ENCODE measurements at regions of chr1 and their contacts with region 1.

Region 1: DNA sequence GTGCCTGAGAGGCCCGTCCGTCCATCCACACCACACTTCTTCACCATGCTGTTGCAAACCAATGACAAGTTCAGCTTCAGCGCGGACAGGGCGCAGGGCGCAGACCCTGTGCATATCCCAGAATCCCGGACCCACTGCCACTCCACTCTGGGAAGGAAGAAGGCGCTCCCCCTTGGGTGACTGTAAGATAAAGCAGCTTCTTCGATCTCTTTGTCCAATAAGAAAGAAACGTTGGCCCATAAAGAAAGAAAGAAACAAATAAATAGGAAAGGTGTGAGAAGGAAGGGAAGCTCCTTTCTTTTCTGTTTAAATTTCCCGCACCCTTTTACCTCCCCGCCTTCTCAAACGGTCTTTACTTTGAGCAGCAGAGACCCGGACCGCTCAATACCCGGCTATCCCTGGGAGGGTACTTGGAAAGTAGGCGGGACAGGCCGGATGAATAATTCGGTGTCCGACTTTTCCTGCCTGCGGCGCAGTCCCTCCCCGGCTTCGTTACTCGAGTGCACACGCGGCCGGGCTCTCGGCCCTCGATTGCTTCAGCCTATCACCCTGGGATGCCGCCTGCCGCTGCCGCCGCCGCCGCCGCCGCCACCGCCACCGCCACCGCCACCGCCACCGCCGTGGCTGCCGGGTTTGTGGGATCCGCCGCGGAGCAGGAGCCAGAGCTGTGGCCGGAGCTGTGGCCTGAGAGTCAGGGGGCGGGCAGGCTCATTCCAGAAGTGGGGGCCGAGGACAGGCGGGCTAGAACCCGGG is 523 bp upstream of the RASAL2 start:
- DNase-seq: peak; percentile 97
- H3K4me3 ChIP-seq: peak overlapping the region; percentile 79 to 92 (median 84)
- H3K27ac ChIP-seq: peak overlapping the region; percentile 84 to 94 (median 90)
- H3K4me1 ChIP-seq: peaks cover 16 to 37% (median 28%) of the 10 kb centered on the region in 4 donors
- H3K27me3 ChIP-seq: no peaks in the 10 kb centered on the region
- CTCF ChIP-seq: peak in 1 of 3 experiments; percentile 2
- EP300 ChIP-seq: no peak
- POLR2A ChIP-seq: no peak

Region 2: GRCh38 chr1:177824508-177824982 is 268.8 kb before region 1 on chr1:
- intact Hi-C with region 1: no loop called
- DNase-seq: no peak
- H3K4me3 ChIP-seq: no peak overlapping the region
- H3K27ac ChIP-seq: no peak overlapping the region
- H3K4me1 ChIP-seq: peaks cover 0 to 13% (median 7%) of the 10 kb centered on the region in 4 donors
- H3K27me3 ChIP-seq: no peaks in the 10 kb centered on the region
- CTCF ChIP-seq: no peak
- EP300 ChIP-seq: no peak
- POLR2A ChIP-seq: no peak

Region 3: GRCh38 chr1:177928194-177928593 is 165.2 kb before region 1 on chr1:
- intact Hi-C with region 1: no loop called
- DNase-seq: no peak
- H3K4me3 ChIP-seq: no peak overlapping the region
- H3K27ac ChIP-seq: no peak overlapping the region
- H3K4me1 ChIP-seq: peaks cover 0 to 6% (median 2%) of the 10 kb centered on the region in 4 donors
- H3K27me3 ChIP-seq: no peaks in the 10 kb centered on the region
- CTCF ChIP-seq: no peak
- EP300 ChIP-seq: no peak
- POLR2A ChIP-seq: no peak

Region 4: DNA sequence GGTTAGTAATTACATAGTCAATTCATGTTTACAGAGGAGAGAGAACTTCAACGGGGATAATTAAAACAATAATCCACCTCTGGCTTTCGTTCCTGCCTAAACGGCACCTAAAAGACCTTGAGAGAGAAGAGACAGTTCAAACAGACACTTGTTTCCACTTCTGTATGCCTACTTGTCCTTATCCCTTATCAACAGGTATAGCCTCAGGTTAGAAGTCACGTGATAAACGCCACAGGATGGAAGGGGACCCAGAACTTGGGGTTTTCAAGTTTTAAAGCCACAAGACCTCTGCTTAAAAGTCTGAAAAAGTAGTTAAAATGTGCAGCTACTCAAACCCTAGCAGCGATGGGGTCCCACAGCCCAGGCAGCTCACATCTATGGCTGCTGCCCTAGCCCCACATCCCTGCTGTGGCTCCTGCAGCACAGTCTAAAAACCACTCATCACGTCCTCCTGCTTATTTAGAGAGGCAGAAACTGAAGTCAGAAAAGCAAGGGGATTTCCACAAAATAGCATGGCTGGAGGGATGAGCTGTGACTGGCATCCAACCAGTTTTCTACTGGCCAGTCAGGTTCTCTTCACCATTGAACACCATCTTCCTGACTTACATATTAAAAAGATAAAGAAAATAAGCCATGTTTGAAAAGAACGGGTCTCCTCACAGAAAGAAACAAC is 72.3 kb before region 1 on chr1:
- intact Hi-C with region 1: no loop called
- DNase-seq: no peak
- H3K4me3 ChIP-seq: no peak overlapping the region
- H3K27ac ChIP-seq: no peak overlapping the region
- H3K4me1 ChIP-seq: no peaks in the 10 kb centered on the region
- H3K27me3 ChIP-seq: no peaks in the 10 kb centered on the region
- CTCF ChIP-seq: no peak
- EP300 ChIP-seq: no peak
- POLR2A ChIP-seq: no peak

Region 5: GRCh38 chr1:178031856-178032320 is 61.5 kb before region 1 on chr1:
- intact Hi-C with region 1: loop called (anchors 2 kb)
- DNase-seq: peak; percentile 97
- H3K4me3 ChIP-seq: no peak overlapping the region
- H3K27ac ChIP-seq: no peak overlapping the region
- H3K4me1 ChIP-seq: peaks cover under 1 to 19% (median 11%) of the 10 kb centered on the region in 4 donors
- H3K27me3 ChIP-seq: no peaks in the 10 kb centered on the region
- CTCF ChIP-seq: peak; percentile 77 to 86 (median 83)
- EP300 ChIP-seq: no peak
- POLR2A ChIP-seq: no peak

Region 6: DNA sequence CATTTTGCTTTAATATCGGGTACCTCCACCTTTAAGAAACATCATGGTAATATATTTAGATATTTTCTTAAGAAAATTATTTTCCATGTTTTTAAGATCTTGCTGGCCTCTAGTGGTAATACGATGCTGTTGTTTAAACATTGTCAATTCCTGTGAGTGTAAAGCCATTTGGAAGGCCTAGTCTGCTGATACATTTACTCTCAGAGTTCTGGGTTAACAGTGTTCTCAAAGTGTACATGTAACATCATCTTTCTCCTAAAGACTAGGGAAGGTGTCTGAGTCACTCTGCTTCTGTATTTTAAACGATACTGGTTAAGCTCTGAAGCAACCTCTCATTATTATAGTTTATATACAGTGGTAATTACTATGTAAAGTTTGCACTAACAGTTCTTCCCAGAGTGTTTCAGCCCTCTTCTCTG is 189.6 kb after region 1 on chr1:
- intact Hi-C with region 1: loop called (anchors 10 kb)
- DNase-seq: no peak
- H3K4me3 ChIP-seq: no peak overlapping the region
- H3K27ac ChIP-seq: no peak overlapping the region
- H3K4me1 ChIP-seq: peaks cover 6 to 21% (median 7%) of the 10 kb centered on the region in 4 donors
- H3K27me3 ChIP-seq: no peaks in the 10 kb centered on the region
- CTCF ChIP-seq: peak; percentile 29 to 46 (median 34)
- EP300 ChIP-seq: no peak
- POLR2A ChIP-seq: no peak